Heart right ventricle (tissue), 16 donors: ENCODE measurements at regions of chr4 and their contacts with region 1.

Region 1: GRCh38 chr4:87144356-87144755 is 76.1 kb downstream of the KLHL8 start:
- DNase-seq: no peak
- ATAC-seq: no peak
- H3K4me3 ChIP-seq: no peak overlapping the region
- H3K27ac ChIP-seq: no peak overlapping the region
- H3K4me1 ChIP-seq: peaks cover 0 to 7% (median 0%) of the 10 kb centered on the region in 9 donors
- H3K27me3 ChIP-seq: no peaks in the 10 kb centered on the region
- CTCF ChIP-seq: no peak

Region 2: DNA sequence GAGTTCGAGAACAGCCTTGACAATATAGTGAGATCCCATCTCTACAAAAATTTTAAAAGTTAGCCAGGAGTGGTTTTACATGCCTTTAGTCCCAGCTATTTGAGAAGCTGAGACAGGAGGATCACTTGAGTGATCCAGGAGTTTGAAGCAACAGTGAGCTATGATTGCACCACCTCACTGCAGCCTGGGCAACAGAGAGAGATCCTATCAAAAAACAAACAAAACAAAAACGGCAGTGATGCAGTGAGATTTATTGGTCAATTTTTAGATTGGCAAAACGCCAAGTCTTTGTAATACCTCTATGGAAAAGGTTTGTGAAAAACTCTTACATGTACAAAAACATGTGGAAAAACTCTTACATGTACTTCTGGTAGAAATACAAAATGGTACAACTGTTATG is 459.0 kb before region 1 on chr4:
- intact Hi-C with region 1: loop called in 1 of 10 experiments (anchors 5 kb)
- DNase-seq: no peak
- ATAC-seq: no peak
- H3K4me3 ChIP-seq: no peak overlapping the region
- H3K27ac ChIP-seq: no peak overlapping the region
- H3K4me1 ChIP-seq: no peaks in the 10 kb centered on the region
- H3K27me3 ChIP-seq: no peaks in the 10 kb centered on the region
- CTCF ChIP-seq: no peak